ENCODE measurements at regions of chr5 and their contacts with region 1.

Region 1: GRCh38 chr5:611721-612486 is at the start of gene CEP72:
- DNase-seq: peak; percentile 84 to 96 (median 94)
- ATAC-seq: peak; percentile 97
- H3K4me3 ChIP-seq: peak within 1 kb of the TSS; percentile 71 to 88
- H3K4me3 Mint-ChIP-seq: peak within 1 kb of the TSS; percentile 88
- H3K27ac ChIP-seq: peak within 1 kb of the TSS; percentile 17 to 49
- H3K27ac Mint-ChIP-seq: peak within 1 kb of the TSS; percentile 82
- H3K4me1 ChIP-seq: peaks cover 19% of the 10 kb centered on the region
- H3K4me1 Mint-ChIP-seq: peaks cover 43% of the 10 kb centered on the region
- H3K27me3 ChIP-seq: no peaks in the 10 kb centered on the region
- H3K27me3 Mint-ChIP-seq: peaks cover 10% of the 10 kb centered on the region
- CTCF ChIP-seq: no peak
- total RNA-seq, gene CEP72: 7.4 to 8.9 TPM

Region 2: DNA sequence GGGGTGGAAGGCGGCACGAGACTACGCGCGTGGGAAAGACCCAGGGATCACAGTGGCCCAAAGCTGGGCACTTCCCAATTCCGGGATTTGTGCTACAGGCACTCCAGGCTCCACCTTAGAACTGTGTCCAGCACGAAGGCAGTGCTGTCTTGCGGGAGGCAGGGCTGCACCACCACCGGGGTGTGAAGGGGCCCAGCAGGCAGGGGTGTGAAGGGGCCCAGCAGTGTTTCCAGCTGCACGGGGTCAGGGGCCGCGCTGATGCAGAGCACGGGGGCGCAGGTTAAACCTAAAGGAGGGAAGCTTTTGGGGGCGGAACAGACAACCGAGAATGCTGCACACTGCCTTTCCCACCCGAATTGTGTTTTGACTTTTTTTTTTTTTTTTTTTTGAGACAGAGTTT is 341.6 kb before region 1 on chr5:
- CTCF ChIA-PET with region 1: no interaction called
- POLR2A ChIA-PET with region 1: no interaction called
- intact Hi-C with region 1: loop called in 1 of 2 experiments (anchors 10 kb)
- DNase-seq: peak in 2 of 9 experiments; percentile 18 to 27
- ATAC-seq: no peak
- H3K4me3 ChIP-seq: peak overlapping the region in 1 of 2 experiments; percentile 82
- H3K4me3 Mint-ChIP-seq: peak overlapping the region; percentile 85
- H3K27ac ChIP-seq: no peak overlapping the region
- H3K27ac Mint-ChIP-seq: peak overlapping the region; percentile 64
- H3K4me1 ChIP-seq: no peaks in the 10 kb centered on the region
- H3K4me1 Mint-ChIP-seq: peaks cover 37% of the 10 kb centered on the region
- H3K27me3 ChIP-seq: no peaks in the 10 kb centered on the region
- H3K27me3 Mint-ChIP-seq: no peaks in the 10 kb centered on the region
- CTCF ChIP-seq: no peak

Region 3: GRCh38 chr5:472656-473553 is 139.0 kb before region 1 on chr5:
- CTCF ChIA-PET with region 1: no interaction called
- POLR2A ChIA-PET with region 1: interaction called, 3 read pairs
- intact Hi-C with region 1: loop called (anchors 2 to 5 kb)
- DNase-seq: peak; percentile 75 to 94 (median 88)
- ATAC-seq: peak; percentile 91
- H3K4me3 ChIP-seq: peak overlapping the region; percentile 71 to 79
- H3K4me3 Mint-ChIP-seq: peak overlapping the region; percentile 79
- H3K27ac ChIP-seq: peak overlapping the region; percentile 66 to 84
- H3K27ac Mint-ChIP-seq: no peak overlapping the region
- H3K4me1 ChIP-seq: peaks cover 11% of the 10 kb centered on the region
- H3K4me1 Mint-ChIP-seq: peaks cover 21% of the 10 kb centered on the region
- H3K27me3 ChIP-seq: peaks cover 6 to 29% of the 10 kb centered on the region in 2 experiments
- H3K27me3 Mint-ChIP-seq: peaks cover 6% of the 10 kb centered on the region
- CTCF ChIP-seq: no peak

Region 4: DNA sequence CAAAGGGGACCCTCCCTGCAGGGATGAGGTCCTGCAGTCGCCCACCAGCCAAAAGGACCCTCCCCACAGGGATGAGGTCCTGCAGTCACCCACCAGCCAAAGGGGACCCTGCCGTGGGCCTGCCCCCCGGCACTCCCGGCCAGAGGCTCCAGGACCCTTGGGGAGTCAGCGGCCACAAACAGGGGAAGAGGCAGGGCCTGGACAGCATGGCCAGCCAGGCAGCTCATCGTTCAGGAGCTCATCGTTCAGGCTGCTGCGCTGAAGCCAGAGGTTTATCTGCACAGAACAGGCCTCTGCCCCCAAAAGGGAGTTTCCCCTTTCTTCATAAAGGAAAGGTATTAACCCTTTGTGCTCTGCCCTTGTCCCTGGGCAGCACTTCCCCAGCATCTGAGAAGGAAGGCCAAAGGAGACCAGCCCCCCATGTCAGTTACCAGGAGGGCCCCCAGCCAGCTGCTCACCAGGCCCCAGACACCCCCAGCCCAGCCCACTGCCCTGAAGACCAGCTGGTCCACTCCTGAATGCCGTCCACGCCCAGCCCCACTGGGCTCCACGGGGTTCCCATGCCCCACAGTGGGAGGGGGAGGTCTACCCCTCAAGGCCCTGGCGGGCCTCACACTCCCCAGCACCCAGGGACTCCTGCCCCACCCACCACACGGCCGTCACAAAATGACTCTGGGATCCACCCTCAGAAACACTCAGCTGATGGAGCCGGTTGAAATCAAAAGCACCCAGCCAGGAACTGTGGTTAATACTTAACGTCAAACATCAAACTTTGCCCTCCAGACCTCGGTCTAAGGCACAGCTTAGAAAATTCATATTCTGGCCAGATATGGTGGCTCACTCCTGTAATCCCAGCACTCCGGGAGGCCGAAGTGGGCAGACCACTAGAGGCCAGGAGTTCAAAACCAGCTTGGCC is 493.7 kb after region 1 on chr5:
- CTCF ChIA-PET with region 1: no interaction called
- POLR2A ChIA-PET with region 1: no interaction called
- intact Hi-C with region 1: loop called (anchors 5 to 10 kb)
- DNase-seq: peak in 8 of 9 experiments; percentile 26 to 89 (median 76)
- ATAC-seq: peak; percentile 73
- H3K4me3 ChIP-seq: peak overlapping the region; percentile 41 to 79
- H3K4me3 Mint-ChIP-seq: peak overlapping the region; percentile 78
- H3K27ac ChIP-seq: peak overlapping the region; percentile 31 to 82
- H3K27ac Mint-ChIP-seq: peak overlapping the region; percentile 97
- H3K4me1 ChIP-seq: peaks cover 99% of the 10 kb centered on the region
- H3K4me1 Mint-ChIP-seq: peaks cover 79% of the 10 kb centered on the region
- H3K27me3 ChIP-seq: no peaks in the 10 kb centered on the region
- H3K27me3 Mint-ChIP-seq: no peaks in the 10 kb centered on the region
- CTCF ChIP-seq: no peak